ENCODE measurements at regions of chr10 and their contacts with region 1.

Region 1: DNA sequence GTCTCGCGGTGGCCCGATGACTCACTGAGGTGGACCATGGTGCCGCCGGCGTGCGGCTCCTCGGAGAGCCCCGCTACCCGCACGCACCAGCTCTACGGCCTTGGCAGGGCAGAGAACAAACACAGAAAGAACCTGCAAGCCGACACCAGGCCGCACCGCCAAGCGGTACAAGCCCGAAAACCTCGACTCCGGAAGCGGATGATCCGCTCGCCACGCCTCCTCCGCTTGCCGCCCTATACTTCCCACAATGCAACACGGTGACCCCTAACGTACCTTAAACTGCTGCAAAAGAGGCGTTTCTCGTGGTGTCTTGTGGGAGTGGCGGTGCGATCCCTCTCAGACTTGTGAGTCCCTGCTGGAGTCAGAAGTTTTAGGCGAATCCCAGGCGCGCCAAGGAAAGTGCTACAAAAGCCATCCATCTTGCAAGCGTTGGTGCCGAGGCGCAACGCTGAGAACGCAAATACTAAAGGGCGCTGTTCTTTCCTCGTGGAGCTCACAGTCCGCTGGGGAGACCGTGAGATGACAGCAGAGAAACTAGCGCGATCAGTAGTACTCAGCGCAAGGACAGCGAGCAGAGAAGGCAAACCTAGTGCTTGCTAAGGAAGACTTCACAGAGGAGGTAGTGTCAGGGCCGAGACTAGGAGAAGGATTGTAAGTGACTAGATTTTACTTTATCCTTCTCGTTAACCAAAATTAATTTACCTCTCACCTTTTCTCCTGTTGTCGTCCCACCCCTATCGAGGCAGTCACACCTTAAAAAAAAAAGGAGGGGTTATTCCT is at the start of gene MRPS16:
- DNase-seq: peak; percentile 92
- H3K4me3 Mint-ChIP-seq: peak within 1 kb of the TSS; percentile 97
- H3K27ac Mint-ChIP-seq: peak within 1 kb of the TSS; percentile 95
- H3K4me1 Mint-ChIP-seq: peaks cover 40% of the 10 kb centered on the region
- H3K27me3 Mint-ChIP-seq: no peaks in the 10 kb centered on the region
- total RNA-seq, gene MRPS16: 158 and 160 TPM in 2 replicates

Region 2: DNA sequence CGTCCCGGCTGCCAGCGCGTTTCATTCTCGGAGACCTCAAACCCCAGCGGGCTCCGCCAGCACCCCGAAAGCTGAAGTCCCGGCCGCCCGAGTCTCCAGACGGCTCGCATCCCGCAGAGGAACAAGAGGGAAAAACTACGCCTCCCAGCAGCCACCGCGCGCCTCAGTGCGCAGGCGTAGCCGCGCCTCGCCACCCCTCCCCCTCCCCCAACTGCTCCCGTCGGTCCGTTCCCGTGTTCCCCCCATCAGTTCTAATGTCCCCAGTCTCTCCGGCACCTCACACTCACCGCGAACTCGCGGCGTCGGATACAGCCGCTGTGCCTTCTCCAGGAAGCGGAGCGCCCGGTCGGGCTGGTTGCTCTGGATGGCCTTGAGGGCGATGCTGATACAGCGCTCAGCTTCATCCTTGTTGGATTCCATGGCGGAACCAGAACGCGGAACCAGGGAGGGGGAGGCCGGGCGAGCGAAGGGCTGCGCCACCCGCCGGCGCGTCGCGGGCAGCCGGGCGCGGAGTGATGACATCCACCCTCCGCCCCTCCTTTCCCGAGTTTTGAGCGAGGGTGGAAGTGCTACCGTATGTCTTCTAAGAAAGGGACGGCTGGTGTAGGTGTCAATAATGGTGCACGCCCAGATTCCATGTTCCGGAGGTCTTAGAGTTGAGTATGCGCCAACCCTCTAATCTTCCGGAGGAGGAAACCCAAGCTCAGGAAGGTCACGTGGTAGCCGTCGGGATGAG is 898.0 kb before region 1 on chr10 and contains the start of gene DNAJB12:
- intact Hi-C with region 1: loop called (anchors 1 kb)
- DNase-seq: peak; percentile 86
- H3K4me3 Mint-ChIP-seq: peak within 1 kb of the TSS; percentile 97
- H3K27ac Mint-ChIP-seq: peak within 1 kb of the TSS; percentile 96
- H3K4me1 Mint-ChIP-seq: peaks cover 31% of the 10 kb centered on the region
- H3K27me3 Mint-ChIP-seq: peaks cover 2% of the 10 kb centered on the region
- total RNA-seq, gene DNAJB12: 32.4 and 38.0 TPM in 2 replicates

Region 3: GRCh38 chr10:72625608-72626443 is 626.8 kb before region 1 on chr10 and contains the start of gene MICU1:
- intact Hi-C with region 1: loop called (anchors 1 kb)
- DNase-seq: peak; percentile 93
- H3K4me3 Mint-ChIP-seq: peak within 1 kb of the TSS; percentile 96
- H3K27ac Mint-ChIP-seq: peak within 1 kb of the TSS; percentile 94
- H3K4me1 Mint-ChIP-seq: peaks cover 13% of the 10 kb centered on the region
- H3K27me3 Mint-ChIP-seq: peaks cover 6% of the 10 kb centered on the region
- total RNA-seq, gene MICU1: 28.4 and 29.5 TPM in 2 replicates

Region 4: GRCh38 chr10:73167783-73168464 is 84.7 kb before region 1 on chr10 and contains the starts of genes ECD and FAM149B1:
- intact Hi-C with region 1: loop called (anchors 1 kb)
- DNase-seq: peak; percentile 91
- H3K4me3 Mint-ChIP-seq: peak within 1 kb of the TSS; percentile 99
- H3K27ac Mint-ChIP-seq: peak within 1 kb of the TSS; percentile 99
- H3K4me1 Mint-ChIP-seq: peaks cover 42% of the 10 kb centered on the region
- H3K27me3 Mint-ChIP-seq: no peaks in the 10 kb centered on the region
- total RNA-seq, gene ECD: 38.0 and 39.5 TPM in 2 replicates
- total RNA-seq, gene FAM149B1: 11.1 and 11.3 TPM in 2 replicates

Region 5: DNA sequence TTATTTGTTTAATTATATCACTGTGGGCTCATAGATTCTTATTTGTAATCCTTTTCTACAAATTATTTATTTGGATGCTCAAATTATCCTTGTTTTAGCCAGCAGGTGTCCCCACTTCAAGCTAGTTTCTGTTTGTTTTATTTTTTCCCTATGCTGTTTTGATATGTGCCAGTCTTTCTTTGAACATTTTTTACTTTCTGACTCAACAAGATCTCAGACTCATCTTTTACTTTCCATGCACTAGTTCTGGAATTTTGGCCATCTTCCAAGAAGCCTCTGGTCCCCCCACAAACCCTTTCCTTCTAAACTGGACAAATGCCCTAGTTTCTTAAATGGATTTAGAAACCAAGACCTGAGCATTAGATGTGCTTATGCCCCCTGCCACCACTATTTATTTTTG is 11.3 kb after region 1 on chr10:
- intact Hi-C with region 1: no loop called
- DNase-seq: no peak
- H3K4me3 Mint-ChIP-seq: no peak overlapping the region
- H3K27ac Mint-ChIP-seq: no peak overlapping the region
- H3K4me1 Mint-ChIP-seq: peaks cover 10% of the 10 kb centered on the region
- H3K27me3 Mint-ChIP-seq: peaks cover 15% of the 10 kb centered on the region

Region 6: DNA sequence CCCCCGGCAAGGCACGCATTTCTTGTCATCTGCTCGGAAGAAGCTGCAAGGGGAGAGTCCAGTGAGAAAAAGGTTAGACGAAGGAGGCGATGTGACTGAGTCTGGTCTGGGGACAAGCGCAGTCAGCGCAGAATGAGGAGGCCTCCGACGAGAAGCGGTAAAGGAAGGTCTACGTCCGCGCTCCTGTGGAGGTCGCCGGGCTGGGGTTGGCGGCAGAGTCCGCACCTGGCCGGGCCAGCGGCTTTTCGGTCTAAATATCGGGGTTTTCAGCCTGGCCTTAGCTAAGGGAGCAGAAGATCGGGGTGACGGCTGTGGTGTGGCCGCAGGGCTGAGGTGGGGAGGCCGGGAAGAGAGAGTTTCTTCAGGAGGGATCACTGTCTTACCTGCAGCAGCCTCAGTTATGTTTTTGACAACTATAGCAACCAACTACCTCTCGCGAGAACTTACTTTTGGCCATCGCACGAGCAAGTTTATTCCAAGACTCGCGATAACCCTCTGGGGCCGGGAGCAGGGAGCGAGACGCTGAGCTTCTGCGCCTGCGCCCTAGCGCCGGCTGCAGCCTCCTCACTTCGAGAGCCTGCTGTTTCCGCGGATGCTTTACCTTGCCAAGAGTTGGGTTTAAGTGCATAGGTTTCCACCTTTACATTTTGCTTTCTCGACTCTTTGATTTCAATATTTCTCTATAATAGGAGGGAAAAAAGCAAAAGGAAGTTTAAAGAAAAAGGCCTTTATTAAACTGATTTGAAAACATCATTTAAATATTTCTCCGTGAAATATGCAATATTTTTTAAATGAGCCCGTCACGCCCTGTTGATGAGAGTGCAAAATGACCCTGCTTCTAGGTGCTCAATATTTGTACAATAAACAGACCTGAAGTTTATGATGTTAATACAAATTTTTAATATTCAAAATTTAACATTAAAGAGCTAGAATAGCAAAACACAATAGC is 106.0 kb after region 1 on chr10 and contains the start of gene CFAP70:
- intact Hi-C with region 1: loop called (anchors 1 kb)
- DNase-seq: peak; percentile 90
- H3K4me3 Mint-ChIP-seq: peak within 1 kb of the TSS; percentile 93
- H3K27ac Mint-ChIP-seq: peak within 1 kb of the TSS; percentile 86
- H3K4me1 Mint-ChIP-seq: peaks cover 20% of the 10 kb centered on the region
- H3K27me3 Mint-ChIP-seq: peaks cover 8% of the 10 kb centered on the region
- total RNA-seq, gene CFAP70: 0.26 and 0.34 TPM in 2 replicates

Region 7: DNA sequence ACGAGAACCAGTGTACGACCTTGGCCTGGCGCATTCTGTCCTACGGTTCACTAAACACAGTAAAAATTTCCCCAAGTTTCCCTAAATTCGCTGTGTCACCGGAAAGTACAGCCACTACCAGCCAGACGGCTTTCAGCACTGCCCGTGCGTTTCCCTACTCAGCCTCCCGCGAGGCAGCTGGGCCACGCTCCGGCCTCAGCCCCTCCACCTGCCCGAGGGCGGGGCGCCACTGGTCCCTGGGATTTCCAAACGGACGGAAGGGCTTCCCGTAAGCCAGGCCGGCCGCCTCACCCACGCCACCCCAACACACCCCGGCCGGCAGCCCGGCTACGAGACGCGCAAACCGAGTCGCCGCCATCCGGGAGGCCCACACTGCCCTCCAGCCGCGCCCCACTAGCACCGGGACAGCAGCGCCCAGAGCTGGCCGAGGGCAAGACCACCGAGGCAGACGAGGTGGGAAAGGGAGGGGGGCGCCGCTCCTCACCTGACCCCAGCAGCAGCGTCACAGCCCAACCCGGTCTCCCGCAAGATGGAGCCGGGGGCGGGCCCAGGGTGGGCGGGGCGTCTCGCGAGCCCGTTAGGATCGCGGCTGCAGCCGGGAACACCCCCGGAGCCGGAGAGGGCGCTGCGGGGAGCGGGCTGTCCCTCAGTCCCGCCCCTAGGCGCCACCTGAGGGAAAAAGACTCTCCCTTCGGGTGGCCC is 161.0 kb after region 1 on chr10 and contains the start of gene ANXA7:
- intact Hi-C with region 1: loop called (anchors 1 kb)
- DNase-seq: peak; percentile 89
- H3K4me3 Mint-ChIP-seq: peak within 1 kb of the TSS; percentile 92
- H3K27ac Mint-ChIP-seq: peak within 1 kb of the TSS; percentile 90
- H3K4me1 Mint-ChIP-seq: peaks cover 45% of the 10 kb centered on the region
- H3K27me3 Mint-ChIP-seq: no peaks in the 10 kb centered on the region
- total RNA-seq, gene ANXA7: 152 and 157 TPM in 2 replicates

Region 8: GRCh38 chr10:74542065-74542464 is 1289.4 kb after region 1 on chr10:
- intact Hi-C with region 1: no loop called
- DNase-seq: no peak
- H3K4me3 Mint-ChIP-seq: no peak overlapping the region
- H3K27ac Mint-ChIP-seq: no peak overlapping the region
- H3K4me1 Mint-ChIP-seq: peaks cover 7% of the 10 kb centered on the region
- H3K27me3 Mint-ChIP-seq: no peaks in the 10 kb centered on the region

Measured in activated T-helper 1 cell treated with anti-CD3 and anti-CD28 coated beads, Interleukin-12 subunit alpha, Interleukin-12 subunit beta, Interleukin-2, Interleukin-4 antibody, amounts not matched to agents 30 ng/mL and 10 ng/mL and 1 ng/mL, durations not matched to agents 14 hours and 24 hours and 36 hours (primary cell).